ENCODE measurements at regions of chr3 and their contacts with region 1.

Region 1: DNA sequence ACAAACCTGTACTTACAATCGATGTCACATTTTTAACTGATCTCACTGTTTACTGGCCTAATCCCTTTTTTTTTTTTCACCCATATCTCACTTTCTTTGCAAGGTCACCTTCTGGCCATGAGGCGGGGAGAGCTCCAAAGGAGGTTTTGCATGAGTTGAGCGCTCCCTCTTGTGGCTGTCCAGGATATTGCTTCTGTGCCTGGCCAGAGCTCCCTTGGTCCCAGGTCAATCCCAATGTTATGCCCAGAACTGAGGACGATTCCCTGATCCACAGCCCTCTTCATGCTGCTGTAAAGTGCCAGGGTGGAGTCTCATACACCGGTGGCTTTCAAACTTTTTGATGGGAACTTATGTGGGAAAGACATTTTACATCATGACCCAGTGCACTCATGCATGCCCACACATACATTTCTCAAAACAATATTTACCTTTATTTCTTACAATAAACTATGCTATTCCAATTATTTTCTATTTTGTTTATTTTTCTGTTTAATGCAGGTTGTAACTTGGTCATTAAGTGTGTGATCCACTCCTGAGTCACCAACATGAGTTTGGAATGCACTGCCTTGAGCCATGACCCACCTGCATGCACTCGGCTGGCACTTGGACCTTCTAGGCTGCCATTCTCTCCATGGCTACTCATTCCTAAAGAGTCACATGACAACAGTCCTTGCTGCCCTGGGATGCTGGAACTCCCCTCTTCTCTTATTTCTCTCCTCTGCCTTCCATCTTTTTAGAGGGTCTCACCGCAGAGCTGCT is 9.6 kb upstream of the SST start:
- DNase-seq: peak; percentile 76 to 89
- H3K4me3 ChIP-seq: no peak overlapping the region
- H3K4me1 ChIP-seq: no peaks in the 10 kb centered on the region
- H3K27me3 ChIP-seq: peaks cover 5% of the 10 kb centered on the region

Region 2: DNA sequence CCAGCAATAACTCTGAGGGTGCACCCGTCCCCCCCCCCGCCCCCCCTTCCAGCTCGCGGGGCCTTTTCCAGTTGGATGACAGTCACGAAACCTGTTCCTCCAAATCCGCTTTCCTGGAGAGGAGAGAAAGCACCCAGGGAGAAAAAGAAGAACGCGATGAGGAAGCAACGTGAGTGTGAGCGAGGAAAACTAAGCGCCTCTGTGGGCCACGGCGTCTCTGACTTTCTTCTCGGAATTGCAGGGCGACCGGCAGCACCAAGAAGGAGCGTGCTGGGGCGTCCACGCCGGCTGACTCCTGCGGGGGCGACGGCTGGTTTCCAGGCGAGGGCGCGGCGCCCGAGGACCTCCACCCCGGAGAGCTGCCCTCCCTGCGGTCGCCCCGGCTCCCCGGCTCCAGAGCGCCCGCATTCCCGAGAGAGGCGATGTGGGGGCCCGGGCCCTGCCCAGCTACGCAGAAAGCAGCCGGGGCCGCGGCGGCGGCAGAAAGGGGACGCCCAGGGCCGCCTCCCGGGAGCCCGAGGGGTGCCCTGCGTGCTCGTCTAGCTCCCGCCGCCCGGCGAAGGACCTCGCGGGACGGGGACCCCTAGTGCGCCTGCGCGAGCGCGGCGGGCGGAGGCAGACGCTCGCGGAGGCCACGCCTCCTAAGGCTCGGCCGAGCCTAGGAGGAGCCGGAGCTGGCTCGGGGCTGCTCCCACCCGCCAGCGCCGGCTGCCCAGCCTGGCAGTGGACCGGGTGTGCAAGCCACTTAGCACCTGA is 852.7 kb before region 1 on chr3:
- in situ Hi-C with region 1: loop called (anchors 25 kb)
- DNase-seq: peak; percentile 84 to 88
- H3K4me3 ChIP-seq: peak overlapping the region; percentile 36
- H3K4me1 ChIP-seq: peaks cover 25% of the 10 kb centered on the region
- H3K27me3 ChIP-seq: 0 out of 2 replicates have a peak, but pooled peaks cover under 1% of the 10 kb centered on the region

Region 3: DNA sequence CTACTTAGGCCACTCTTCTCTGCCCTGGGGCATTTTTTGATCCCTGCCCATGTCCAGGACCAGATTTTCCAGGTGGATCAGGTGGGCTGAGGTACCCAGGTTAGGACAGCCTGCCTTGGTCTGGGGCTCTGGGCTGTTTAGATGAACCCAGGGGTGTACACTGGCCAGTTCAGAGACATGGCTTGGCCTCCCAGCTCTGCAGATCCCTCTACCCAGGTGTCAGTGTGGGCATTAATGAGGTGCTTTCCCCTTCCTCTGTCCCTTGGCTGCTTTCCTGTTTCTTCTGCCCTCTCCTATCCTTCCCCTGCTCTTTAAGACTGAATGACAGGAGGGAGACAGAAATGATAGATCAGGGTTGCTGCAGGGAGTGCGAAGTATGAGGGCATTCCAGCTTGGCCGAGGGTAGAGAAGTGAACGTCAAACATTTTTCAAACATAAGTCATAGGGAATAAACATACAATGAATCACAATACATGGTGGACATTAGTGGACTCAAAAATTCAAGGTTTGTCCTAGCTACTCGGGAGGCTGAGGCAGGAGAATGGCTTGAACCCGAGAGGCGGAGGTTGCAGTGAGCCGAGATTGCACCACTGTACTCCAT is 452.1 kb before region 1 on chr3:
- in situ Hi-C with region 1: loop called (anchors 10 kb)
- DNase-seq: no peak
- H3K4me3 ChIP-seq: no peak overlapping the region
- H3K4me1 ChIP-seq: no peaks in the 10 kb centered on the region
- H3K27me3 ChIP-seq: peaks cover 3% of the 10 kb centered on the region; the same call in 1 of the 2 replicates

Region 4: DNA sequence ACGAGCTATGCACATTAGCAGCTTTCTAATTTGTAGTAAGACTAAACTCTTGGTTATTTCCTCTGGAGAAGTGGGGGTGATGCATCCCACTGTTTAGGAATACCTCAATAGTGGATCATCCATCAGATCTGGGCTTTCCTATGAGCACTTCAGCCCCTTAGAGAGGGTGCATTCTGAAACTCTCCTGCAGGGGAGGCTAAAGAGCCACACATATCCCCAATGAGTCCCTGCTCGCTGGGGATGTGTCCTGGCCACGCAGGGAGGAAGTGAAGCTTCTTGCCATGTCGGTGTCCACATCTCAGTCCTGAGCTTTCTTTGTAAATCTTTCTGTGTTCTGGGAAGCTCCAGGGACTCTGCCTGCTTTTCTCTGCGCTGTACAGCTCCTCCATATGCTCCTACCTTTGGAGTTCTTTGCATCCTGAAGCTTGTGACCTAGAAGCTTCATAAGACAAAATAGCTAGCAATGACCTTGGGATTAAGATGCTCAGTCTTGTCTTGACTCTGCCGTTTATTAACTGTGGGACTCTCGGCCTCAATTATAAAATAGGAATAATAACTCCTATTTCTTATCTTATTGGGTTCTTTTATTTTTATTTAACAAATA is 360.0 kb before region 1 on chr3:
- in situ Hi-C with region 1: loop called (anchors 5 kb)
- DNase-seq: peak; percentile 43 to 81
- H3K4me3 ChIP-seq: no peak overlapping the region
- H3K4me1 ChIP-seq: peaks cover 7% of the 10 kb centered on the region; the same call in 1 of the 2 replicates
- H3K27me3 ChIP-seq: peaks cover 31% of the 10 kb centered on the region

Region 5: GRCh38 chr3:187533797-187534196 is 146.0 kb before region 1 on chr3:
- in situ Hi-C with region 1: no loop called
- DNase-seq: no peak
- H3K4me3 ChIP-seq: no peak overlapping the region
- H3K4me1 ChIP-seq: no peaks in the 10 kb centered on the region
- H3K27me3 ChIP-seq: 0 out of 2 replicates have a peak, but pooled peaks cover 3% of the 10 kb centered on the region

Region 6: GRCh38 chr3:187963677-187964385 is 284.0 kb after region 1 on chr3:
- in situ Hi-C with region 1: no loop called
- DNase-seq: no peak
- H3K4me3 ChIP-seq: no peak overlapping the region
- H3K4me1 ChIP-seq: no peaks in the 10 kb centered on the region
- H3K27me3 ChIP-seq: no peaks in the 10 kb centered on the region